Activated CD4-positive, alpha-beta T cell treated with anti-CD3 and anti-CD28 coated beads for 36 hours (primary cell): ENCODE measurements at regions of chr15 and their contacts with region 1.

Region 1: GRCh38 chr15:68277603-68278344 is at the start of gene FEM1B:
- DNase-seq: peak; percentile 94
- ATAC-seq: peak; percentile 79
- H3K4me3 Mint-ChIP-seq: peak within 1 kb of the TSS; percentile 99
- H3K27ac Mint-ChIP-seq: peak within 1 kb of the TSS; percentile 99
- H3K4me1 Mint-ChIP-seq: peaks cover 43% of the 10 kb centered on the region
- H3K27me3 Mint-ChIP-seq: no peaks in the 10 kb centered on the region
- total RNA-seq, gene FEM1B: 41.1 to 50.0 TPM

Region 2: GRCh38 chr15:67358812-67359211 is 919.0 kb before region 1 on chr15:
- CTCF ChIA-PET with region 1: no interaction called
- POLR2A ChIA-PET with region 1: no interaction called
- intact Hi-C with region 1: no loop called
- DNase-seq: no peak
- ATAC-seq: no peak
- H3K4me3 Mint-ChIP-seq: no peak overlapping the region
- H3K27ac Mint-ChIP-seq: no peak overlapping the region
- H3K4me1 Mint-ChIP-seq: no peaks in the 10 kb centered on the region
- H3K27me3 Mint-ChIP-seq: no peaks in the 10 kb centered on the region

Region 3: GRCh38 chr15:67542420-67543347 is 735.1 kb before region 1 on chr15 and contains the start of gene MAP2K5:
- CTCF ChIA-PET with region 1: no interaction called
- POLR2A ChIA-PET with region 1: no interaction called
- intact Hi-C with region 1: loop called in 1 of 2 experiments (anchors 5 kb)
- DNase-seq: peak; percentile 90
- ATAC-seq: peak; percentile 70
- H3K4me3 Mint-ChIP-seq: peak within 1 kb of the TSS; percentile 82
- H3K27ac Mint-ChIP-seq: peak within 1 kb of the TSS; percentile 95
- H3K4me1 Mint-ChIP-seq: peaks cover 43% of the 10 kb centered on the region
- H3K27me3 Mint-ChIP-seq: no peaks in the 10 kb centered on the region
- total RNA-seq, gene MAP2K5: 18.0 to 26.7 TPM

Region 4: DNA sequence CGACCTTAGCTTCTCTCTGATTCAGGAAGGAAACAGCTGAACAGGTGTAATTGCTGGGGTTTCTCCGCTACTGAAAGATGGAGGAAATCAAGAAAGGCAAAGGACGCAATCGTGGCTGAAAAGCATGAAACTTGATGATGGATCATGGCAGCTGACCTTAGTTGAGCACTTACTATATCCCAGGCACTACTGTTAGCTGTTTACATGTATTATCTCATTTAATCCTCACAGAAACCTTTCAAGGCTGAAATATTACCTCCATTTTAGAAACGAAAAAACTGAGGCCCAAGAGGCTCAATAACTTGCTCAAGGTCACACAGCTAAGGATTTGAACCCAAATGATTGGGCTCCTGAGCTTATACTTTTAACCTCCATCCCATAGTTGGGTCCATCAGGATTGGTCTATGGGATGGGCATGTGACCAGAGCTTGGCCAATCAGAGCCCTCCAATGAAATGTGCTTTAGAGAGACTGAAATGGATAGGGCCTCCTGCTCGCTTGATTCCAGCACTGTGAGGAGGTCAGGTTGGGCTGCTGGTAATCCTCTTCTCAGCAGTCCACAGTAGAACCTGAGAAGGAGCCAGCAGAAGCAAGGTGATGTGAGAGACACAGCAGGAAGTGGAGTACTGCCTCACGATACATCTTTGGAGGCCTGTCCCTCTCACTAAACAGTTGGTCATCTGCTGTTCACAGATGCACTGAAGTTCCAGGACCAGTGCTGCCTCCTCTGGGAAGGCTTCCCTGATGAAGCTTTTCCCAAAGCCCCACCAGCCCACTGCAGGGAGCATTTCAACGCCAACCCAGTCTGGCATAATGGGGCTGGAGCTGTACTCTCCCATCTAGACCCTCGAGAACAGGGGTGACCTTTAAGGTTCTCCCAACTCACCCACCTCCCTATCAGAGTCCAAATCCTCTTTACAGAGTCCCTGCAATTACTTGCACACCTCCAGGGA is 58.7 kb before region 1 on chr15:
- CTCF ChIA-PET with region 1: no interaction called
- POLR2A ChIA-PET with region 1: no interaction called
- intact Hi-C with region 1: no loop called
- DNase-seq: no peak
- ATAC-seq: no peak
- H3K4me3 Mint-ChIP-seq: no peak overlapping the region
- H3K27ac Mint-ChIP-seq: no peak overlapping the region
- H3K4me1 Mint-ChIP-seq: no peaks in the 10 kb centered on the region
- H3K27me3 Mint-ChIP-seq: no peaks in the 10 kb centered on the region

Region 5: GRCh38 chr15:68229386-68230156 is 48.2 kb before region 1 on chr15 and contains the start of gene CLN6:
- CTCF ChIA-PET with region 1: interaction called, 4 read pairs
- POLR2A ChIA-PET with region 1: interaction called, 18 read pairs
- intact Hi-C with region 1: loop called (anchors 1 kb)
- DNase-seq: peak; percentile 88
- ATAC-seq: peak; percentile 88
- H3K4me3 Mint-ChIP-seq: peak within 1 kb of the TSS; percentile 99
- H3K27ac Mint-ChIP-seq: peak within 1 kb of the TSS; percentile 95
- H3K4me1 Mint-ChIP-seq: peaks cover 47% of the 10 kb centered on the region
- H3K27me3 Mint-ChIP-seq: no peaks in the 10 kb centered on the region
- total RNA-seq, gene CLN6: 45.1 to 48.2 TPM

Region 6: GRCh38 chr15:68292157-68292781 is 14.5 kb after region 1 on chr15:
- CTCF ChIA-PET with region 1: interaction called, 9 read pairs
- POLR2A ChIA-PET with region 1: interaction called, 10 read pairs
- intact Hi-C with region 1: loop called in 1 of 2 experiments (anchors 1 kb)
- DNase-seq: no peak
- ATAC-seq: peak; percentile 53
- H3K4me3 Mint-ChIP-seq: no peak overlapping the region
- H3K27ac Mint-ChIP-seq: no peak overlapping the region
- H3K4me1 Mint-ChIP-seq: peaks cover 57% of the 10 kb centered on the region
- H3K27me3 Mint-ChIP-seq: no peaks in the 10 kb centered on the region

Region 7: DNA sequence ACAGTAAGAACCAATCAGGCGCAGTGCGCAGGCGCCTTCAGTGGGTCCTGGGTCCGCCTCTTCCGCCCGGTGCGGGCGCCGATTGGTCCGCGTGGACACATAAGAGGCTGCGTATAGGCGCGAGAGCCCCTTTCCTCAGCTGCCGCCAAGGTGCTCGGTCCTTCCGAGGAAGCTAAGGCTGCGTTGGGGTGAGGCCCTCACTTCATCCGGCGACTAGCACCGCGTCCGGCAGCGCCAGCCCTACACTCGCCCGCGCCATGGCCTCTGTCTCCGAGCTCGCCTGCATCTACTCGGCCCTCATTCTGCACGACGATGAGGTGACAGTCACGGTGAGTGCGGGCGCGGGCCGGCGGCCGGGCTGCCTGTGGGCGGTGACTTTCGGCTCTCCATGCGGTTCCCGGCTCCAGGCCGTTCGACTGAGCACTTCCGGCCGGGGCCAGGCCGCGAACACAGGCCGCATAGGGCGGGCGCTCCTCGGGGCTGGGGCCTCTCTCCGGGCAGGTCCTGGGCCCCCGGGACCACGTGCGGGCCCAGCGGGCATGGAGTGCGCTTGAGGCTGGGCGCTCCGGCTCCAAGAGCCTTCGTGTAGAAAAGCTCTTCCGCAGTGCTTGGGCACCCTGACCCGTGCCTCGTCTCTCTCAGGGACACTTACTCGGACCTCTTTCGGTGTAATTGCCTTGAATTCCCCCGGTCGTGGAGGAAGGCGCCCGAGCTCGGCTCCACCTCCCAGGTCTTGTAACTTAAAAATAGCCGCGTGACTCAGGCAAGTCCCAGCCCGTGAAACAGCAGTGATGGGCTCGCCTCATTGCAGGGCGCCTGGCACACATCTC is 1175.1 kb after region 1 on chr15 and contains the start of gene RPLP1:
- CTCF ChIA-PET with region 1: no interaction called
- POLR2A ChIA-PET with region 1: no interaction called
- intact Hi-C with region 1: loop called in 1 of 2 experiments (anchors 5 kb)
- DNase-seq: peak; percentile 97
- ATAC-seq: peak; percentile 94
- H3K4me3 Mint-ChIP-seq: peak within 1 kb of the TSS; percentile 91
- H3K27ac Mint-ChIP-seq: peak within 1 kb of the TSS; percentile 99
- H3K4me1 Mint-ChIP-seq: peaks cover 24% of the 10 kb centered on the region
- H3K27me3 Mint-ChIP-seq: no peaks in the 10 kb centered on the region
- total RNA-seq, gene RPLP1: 1,576 to 2,330 TPM